Activated naive CD4-positive, alpha-beta T cell treated with anti-CD3 and anti-CD28 coated beads, Interleukin-2, amount 10 ng/mL, durations not matched to agents 7 days and 5 days (primary cell): ENCODE measurements at regions of chr19 and their contacts with region 1.

Region 1: GRCh38 chr19:49468746-49469447 is 5.1 kb upstream of the FLT3LG start:
- DNase-seq: peak; percentile 97
- H3K4me3 Mint-ChIP-seq: peak overlapping the region; percentile 71
- H3K27ac Mint-ChIP-seq: peak overlapping the region; percentile 99
- H3K4me1 Mint-ChIP-seq: peaks cover 58% of the 10 kb centered on the region
- H3K27me3 Mint-ChIP-seq: peaks cover under 1% of the 10 kb centered on the region

Region 2: GRCh38 chr19:49391581-49392399 is 77.1 kb before region 1 on chr19:
- CTCF ChIA-PET with region 1: interaction called, 30 read pairs
- DNase-seq: peak; percentile 87
- H3K4me3 Mint-ChIP-seq: no peak overlapping the region
- H3K27ac Mint-ChIP-seq: peak overlapping the region; percentile 34
- H3K4me1 Mint-ChIP-seq: peaks cover 32% of the 10 kb centered on the region
- H3K27me3 Mint-ChIP-seq: peaks cover 74% of the 10 kb centered on the region

Region 3: DNA sequence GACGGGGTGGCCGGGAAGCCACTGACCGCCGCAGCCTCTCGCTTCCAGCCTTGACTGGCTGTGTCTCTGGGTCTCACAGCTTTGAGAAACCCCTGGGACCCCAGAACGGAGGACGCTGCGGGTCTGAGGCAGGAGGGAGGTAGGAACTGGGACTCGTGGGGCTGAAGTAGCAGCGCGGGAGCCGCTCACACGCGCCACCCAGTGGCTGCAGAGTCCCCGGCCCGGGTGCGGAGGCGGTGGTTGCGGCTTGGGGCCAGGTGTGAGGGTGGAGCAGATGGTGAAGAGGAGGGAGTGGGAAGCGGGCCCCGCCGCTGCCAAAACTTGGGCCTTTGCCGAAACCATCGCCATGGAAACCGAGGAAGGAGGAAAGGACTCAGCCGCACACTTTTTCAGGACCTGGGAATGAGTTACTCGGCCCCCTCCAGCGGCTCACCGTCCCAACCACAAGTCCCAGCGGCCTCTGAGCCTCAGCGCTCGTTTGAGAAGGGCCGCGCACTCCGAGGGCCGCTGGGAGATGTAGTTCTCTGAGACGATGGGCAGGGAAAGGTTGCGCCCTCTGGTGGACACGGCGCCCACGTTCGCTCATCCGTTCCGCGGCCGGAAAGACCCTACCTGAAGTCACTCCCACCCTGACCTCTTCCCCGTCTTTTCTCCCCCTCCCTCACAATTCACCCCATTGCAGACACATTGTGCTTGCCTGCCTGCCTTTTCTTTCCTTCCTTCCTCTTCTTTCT is 25.4 kb before region 1 on chr19:
- CTCF ChIA-PET with region 1: interaction called, 14 read pairs
- DNase-seq: peak; percentile 95
- H3K4me3 Mint-ChIP-seq: peak overlapping the region; percentile 81
- H3K27ac Mint-ChIP-seq: peak overlapping the region; percentile 81
- H3K4me1 Mint-ChIP-seq: peaks cover 64% of the 10 kb centered on the region
- H3K27me3 Mint-ChIP-seq: peaks cover 55% of the 10 kb centered on the region

Region 4: GRCh38 chr19:49451430-49452181 is 17.3 kb before region 1 on chr19 and contains the start of gene PIH1D1:
- CTCF ChIA-PET with region 1: interaction called, 33 read pairs
- DNase-seq: peak; percentile 98
- H3K4me3 Mint-ChIP-seq: peak within 1 kb of the TSS; percentile 97
- H3K27ac Mint-ChIP-seq: peak within 1 kb of the TSS; percentile 99
- H3K4me1 Mint-ChIP-seq: peaks cover 76% of the 10 kb centered on the region
- H3K27me3 Mint-ChIP-seq: no peaks in the 10 kb centered on the region

Region 5: GRCh38 chr19:49512970-49513745 is 44.3 kb after region 1 on chr19:
- CTCF ChIA-PET with region 1: no interaction called
- DNase-seq: peak; percentile 57
- H3K4me3 Mint-ChIP-seq: peak overlapping the region; percentile 75
- H3K27ac Mint-ChIP-seq: peak overlapping the region; percentile 55
- H3K4me1 Mint-ChIP-seq: peaks cover 33% of the 10 kb centered on the region
- H3K27me3 Mint-ChIP-seq: peaks cover 28% of the 10 kb centered on the region